Naive thymus-derived CD4-positive, alpha-beta T cell (primary cell): ENCODE measurements at regions of chr5 and their contacts with region 1.

Region 1: DNA sequence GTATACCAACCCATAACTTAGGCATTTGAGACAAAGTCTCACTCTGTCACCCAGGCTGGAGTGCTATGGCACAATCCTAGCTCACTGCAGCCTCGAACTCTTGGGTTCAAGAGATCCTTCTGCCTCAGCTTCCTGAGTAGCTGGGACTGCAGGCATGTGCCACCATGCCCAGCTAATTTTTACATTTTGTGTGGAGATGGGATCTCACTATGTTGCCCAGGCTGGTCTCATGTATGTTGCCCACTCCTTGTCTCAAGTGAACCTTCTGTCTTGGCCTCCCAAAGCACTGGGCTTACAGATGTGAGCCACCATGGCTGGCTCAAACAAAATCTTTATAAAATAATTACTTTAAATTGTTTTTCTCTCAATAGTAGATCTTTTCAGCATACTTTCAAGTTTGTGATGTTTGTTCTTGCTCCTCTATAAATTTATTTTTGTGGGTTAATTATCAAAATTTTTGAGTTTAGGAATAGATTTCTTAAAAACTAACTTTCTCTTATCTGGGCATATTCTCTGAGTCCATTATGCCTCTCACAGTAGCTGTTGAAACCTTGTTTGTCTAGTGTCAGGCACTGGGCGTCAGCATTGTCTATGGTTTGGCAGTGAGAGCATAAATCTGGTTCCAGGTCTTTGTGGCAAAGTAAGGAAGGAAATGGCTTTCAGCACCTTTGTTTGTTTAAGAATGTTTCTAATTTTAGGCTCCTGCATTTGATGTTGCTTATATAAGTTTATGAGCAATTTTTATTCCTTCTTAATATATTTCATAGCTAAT is 38.7 kb downstream of the NLN start:
- DNase-seq: peak in 7 of 9 donors; percentile 53 to 81 (median 67)
- ATAC-seq: peak; percentile 95
- H3K4me3 ChIP-seq: no peak overlapping the region
- H3K4me3 Mint-ChIP-seq: peak overlapping the region in 3 of 10 donors; percentile 2 to 24 (median 4)
- H3K27ac ChIP-seq: no peak overlapping the region
- H3K27ac Mint-ChIP-seq: peak overlapping the region in 3 of 9 donors; percentile 0 to 68 (median 23)
- H3K4me1 ChIP-seq: peaks cover 0 to 4% of the 10 kb centered on the region in 2 donors
- H3K4me1 Mint-ChIP-seq: peaks cover 3 to 10% (median 6%) of the 10 kb centered on the region in 7 donors
- H3K27me3 ChIP-seq: no peaks in the 10 kb centered on the region
- H3K27me3 Mint-ChIP-seq: no peaks in the 10 kb centered on the region

Region 2: GRCh38 chr5:64707191-64707590 is 1053.5 kb before region 1 on chr5:
- CTCF ChIA-PET with region 1: no interaction called
- POLR2A ChIA-PET with region 1: no interaction called
- intact Hi-C with region 1: no loop called
- DNase-seq: no peak
- ATAC-seq: no peak
- H3K4me3 ChIP-seq: no peak overlapping the region
- H3K4me3 Mint-ChIP-seq: no peak overlapping the region
- H3K27ac ChIP-seq: no peak overlapping the region
- H3K27ac Mint-ChIP-seq: no peak overlapping the region
- H3K4me1 ChIP-seq: no peaks in the 10 kb centered on the region
- H3K4me1 Mint-ChIP-seq: no peaks in the 10 kb centered on the region
- H3K27me3 ChIP-seq: peaks cover 0 to 3% of the 10 kb centered on the region in 2 donors
- H3K27me3 Mint-ChIP-seq: peaks cover 14 to 35% (median 20%) of the 10 kb centered on the region in 5 donors

Region 3: GRCh38 chr5:65695162-65695755 is 65.4 kb before region 1 on chr5:
- CTCF ChIA-PET with region 1: no interaction called
- POLR2A ChIA-PET with region 1: no interaction called
- intact Hi-C with region 1: no loop called
- DNase-seq: no peak
- ATAC-seq: no peak
- H3K4me3 ChIP-seq: no peak overlapping the region
- H3K4me3 Mint-ChIP-seq: no peak overlapping the region
- H3K27ac ChIP-seq: no peak overlapping the region
- H3K27ac Mint-ChIP-seq: no peak overlapping the region
- H3K4me1 ChIP-seq: no peaks in the 10 kb centered on the region
- H3K4me1 Mint-ChIP-seq: peaks cover 0 to 29% (median 28%) of the 10 kb centered on the region in 7 donors
- H3K27me3 ChIP-seq: no peaks in the 10 kb centered on the region
- H3K27me3 Mint-ChIP-seq: no peaks in the 10 kb centered on the region

Region 4: GRCh38 chr5:66041627-66042026 is 280.9 kb after region 1 on chr5:
- CTCF ChIA-PET with region 1: no interaction called
- POLR2A ChIA-PET with region 1: no interaction called
- intact Hi-C with region 1: loop called in 1 of 2 experiments (anchors 1 kb)
- DNase-seq: no peak
- ATAC-seq: no peak
- H3K4me3 ChIP-seq: no peak overlapping the region
- H3K4me3 Mint-ChIP-seq: no peak overlapping the region
- H3K27ac ChIP-seq: no peak overlapping the region
- H3K27ac Mint-ChIP-seq: peak overlapping the region in 3 of 9 donors; percentile 44 to 59 (median 57)
- H3K4me1 ChIP-seq: no peaks in the 10 kb centered on the region
- H3K4me1 Mint-ChIP-seq: peaks cover 0 to 35% (median 29%) of the 10 kb centered on the region in 7 donors
- H3K27me3 ChIP-seq: no peaks in the 10 kb centered on the region
- H3K27me3 Mint-ChIP-seq: no peaks in the 10 kb centered on the region

Region 5: GRCh38 chr5:66171349-66172344 is 411.0 kb after region 1 on chr5:
- CTCF ChIA-PET with region 1: interaction called, 6 read pairs
- POLR2A ChIA-PET with region 1: no interaction called
- intact Hi-C with region 1: loop called (anchors 1 kb)
- DNase-seq: peak in 7 of 9 donors; percentile 69 to 85 (median 80)
- ATAC-seq: peak; percentile 89
- H3K4me3 ChIP-seq: no peak overlapping the region
- H3K4me3 Mint-ChIP-seq: peak overlapping the region in 6 of 10 donors; percentile 5 to 48 (median 38)
- H3K27ac ChIP-seq: peak overlapping the region; percentile 43
- H3K27ac Mint-ChIP-seq: peak overlapping the region; percentile 69 to 93 (median 90)
- H3K4me1 ChIP-seq: peaks cover 7 to 8% of the 10 kb centered on the region in 2 donors
- H3K4me1 Mint-ChIP-seq: peaks cover 9 to 39% (median 28%) of the 10 kb centered on the region in 7 donors
- H3K27me3 ChIP-seq: no peaks in the 10 kb centered on the region
- H3K27me3 Mint-ChIP-seq: no peaks in the 10 kb centered on the region

Region 6: GRCh38 chr5:66757188-66757833 is 996.6 kb after region 1 on chr5:
- CTCF ChIA-PET with region 1: no interaction called
- POLR2A ChIA-PET with region 1: no interaction called
- intact Hi-C with region 1: loop called in 1 of 2 experiments (anchors 5 kb)
- DNase-seq: peak in 4 of 9 donors; percentile 5 to 37 (median 22)
- ATAC-seq: peak; percentile 54
- H3K4me3 ChIP-seq: no peak overlapping the region
- H3K4me3 Mint-ChIP-seq: no peak overlapping the region
- H3K27ac ChIP-seq: no peak overlapping the region
- H3K27ac Mint-ChIP-seq: no peak overlapping the region
- H3K4me1 ChIP-seq: no peaks in the 10 kb centered on the region
- H3K4me1 Mint-ChIP-seq: no peaks in the 10 kb centered on the region
- H3K27me3 ChIP-seq: no peaks in the 10 kb centered on the region
- H3K27me3 Mint-ChIP-seq: peaks cover 9 to 46% (median 15%) of the 10 kb centered on the region in 5 donors

Region 7: DNA sequence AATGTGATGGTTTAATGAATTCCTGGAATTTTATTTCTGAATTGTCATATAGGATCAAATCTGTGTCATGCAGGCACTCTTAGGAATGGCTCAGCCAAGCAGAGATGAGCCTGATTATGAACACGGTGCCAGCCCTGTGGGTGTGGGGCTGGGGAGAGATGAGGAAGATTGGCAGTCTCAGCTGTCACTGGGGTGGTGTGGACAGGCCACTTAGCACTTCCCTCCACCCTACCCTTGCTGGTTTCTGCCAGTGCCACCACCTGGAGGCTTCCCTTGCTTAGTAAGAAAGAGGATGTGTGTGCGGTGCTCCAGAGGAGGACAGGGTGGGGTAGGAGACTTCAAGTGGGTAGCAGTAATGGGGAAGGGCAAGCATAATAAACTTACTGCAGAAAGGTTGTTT is 1209.3 kb after region 1 on chr5:
- CTCF ChIA-PET with region 1: no interaction called
- POLR2A ChIA-PET with region 1: no interaction called
- intact Hi-C with region 1: no loop called
- DNase-seq: no peak
- ATAC-seq: no peak
- H3K4me3 ChIP-seq: no peak overlapping the region
- H3K4me3 Mint-ChIP-seq: no peak overlapping the region
- H3K27ac ChIP-seq: no peak overlapping the region
- H3K27ac Mint-ChIP-seq: no peak overlapping the region
- H3K4me1 ChIP-seq: no peaks in the 10 kb centered on the region
- H3K4me1 Mint-ChIP-seq: peaks cover 0 to 4% (median 0%) of the 10 kb centered on the region in 7 donors
- H3K27me3 ChIP-seq: no peaks in the 10 kb centered on the region
- H3K27me3 Mint-ChIP-seq: peaks cover 0 to 4% (median 0%) of the 10 kb centered on the region in 5 donors